ENCODE measurements at regions of chr14 and their contacts with region 1.

Region 1: GRCh38 chr14:95561001-95561412 is 26.2 kb downstream of the GLRX5 start:
- DNase-seq: peak; percentile 97
- H3K4me3 Mint-ChIP-seq: no peak overlapping the region
- H3K27ac Mint-ChIP-seq: no peak overlapping the region
- H3K4me1 Mint-ChIP-seq: peaks cover 2% of the 10 kb centered on the region
- H3K27me3 Mint-ChIP-seq: peaks cover 4% of the 10 kb centered on the region

Region 2: DNA sequence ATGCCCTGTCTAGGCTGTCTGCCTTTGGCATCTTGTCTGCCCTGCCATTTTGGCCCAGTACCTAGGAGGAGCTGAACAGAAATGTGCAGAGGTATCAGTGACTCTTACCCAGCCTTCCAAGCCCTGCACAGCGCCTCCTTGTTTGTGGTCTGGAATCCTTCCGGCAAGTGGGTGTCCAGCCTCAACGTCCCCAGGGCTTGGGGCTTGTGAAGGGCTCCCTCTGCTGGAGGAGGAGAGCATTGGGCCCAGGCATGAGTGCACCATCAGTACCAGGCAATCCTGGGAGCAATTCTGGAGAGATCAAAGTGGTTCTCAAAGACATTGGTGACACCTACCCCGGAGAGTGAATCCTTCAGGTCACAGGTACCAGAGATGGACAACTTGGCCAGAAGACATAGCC is 122.8 kb after region 1 on chr14:
- intact Hi-C with region 1: loop called (anchors 2 kb)
- DNase-seq: peak; percentile 76
- H3K4me3 Mint-ChIP-seq: no peak overlapping the region
- H3K27ac Mint-ChIP-seq: no peak overlapping the region
- H3K4me1 Mint-ChIP-seq: no peaks in the 10 kb centered on the region
- H3K27me3 Mint-ChIP-seq: peaks cover 10% of the 10 kb centered on the region

Region 3: DNA sequence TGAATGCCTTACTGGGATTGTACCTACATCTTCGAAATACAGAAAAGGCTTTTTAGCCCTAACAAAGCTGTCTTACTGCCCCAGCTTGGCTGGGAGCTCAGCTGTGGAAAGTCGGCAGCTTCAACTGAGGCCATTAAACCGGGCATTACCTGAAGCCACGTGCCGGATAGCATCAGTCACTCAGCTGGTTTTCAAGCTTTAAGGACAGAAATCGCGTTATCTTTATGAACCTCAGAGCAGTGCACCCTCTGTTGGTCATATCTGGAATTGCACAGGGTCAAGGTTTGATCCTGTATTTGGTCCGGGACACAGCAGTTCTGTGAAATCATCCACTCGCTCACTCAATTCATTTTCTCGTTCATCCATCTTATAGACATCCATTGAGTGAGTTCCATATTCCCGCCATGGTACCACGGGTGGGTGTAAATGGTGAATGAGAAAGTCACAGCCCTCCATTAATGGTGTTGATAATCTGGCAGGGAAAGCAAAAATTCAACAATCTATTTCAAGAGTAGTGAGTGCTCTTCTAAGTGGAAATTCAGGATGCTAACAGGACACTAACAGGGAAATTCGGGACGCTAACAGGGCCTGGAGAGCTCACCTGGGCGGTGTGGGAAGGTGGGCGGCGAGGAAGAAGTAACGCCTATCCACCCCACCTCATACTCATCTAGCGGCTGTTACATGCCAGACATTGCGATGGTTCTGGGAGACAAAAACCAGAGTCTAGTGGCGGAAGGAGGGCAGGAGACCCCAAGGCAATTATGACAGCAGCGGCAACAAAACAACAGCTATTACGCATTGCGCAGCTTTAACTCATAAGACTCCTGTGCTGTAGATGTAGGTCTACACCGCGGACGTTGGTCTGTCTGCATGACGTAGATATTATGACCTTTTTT is 213.5 kb after region 1 on chr14:
- intact Hi-C with region 1: loop called (anchors 1 kb)
- DNase-seq: peak; percentile 86
- H3K4me3 Mint-ChIP-seq: no peak overlapping the region
- H3K27ac Mint-ChIP-seq: no peak overlapping the region
- H3K4me1 Mint-ChIP-seq: no peaks in the 10 kb centered on the region
- H3K27me3 Mint-ChIP-seq: peaks cover 8% of the 10 kb centered on the region

Region 4: DNA sequence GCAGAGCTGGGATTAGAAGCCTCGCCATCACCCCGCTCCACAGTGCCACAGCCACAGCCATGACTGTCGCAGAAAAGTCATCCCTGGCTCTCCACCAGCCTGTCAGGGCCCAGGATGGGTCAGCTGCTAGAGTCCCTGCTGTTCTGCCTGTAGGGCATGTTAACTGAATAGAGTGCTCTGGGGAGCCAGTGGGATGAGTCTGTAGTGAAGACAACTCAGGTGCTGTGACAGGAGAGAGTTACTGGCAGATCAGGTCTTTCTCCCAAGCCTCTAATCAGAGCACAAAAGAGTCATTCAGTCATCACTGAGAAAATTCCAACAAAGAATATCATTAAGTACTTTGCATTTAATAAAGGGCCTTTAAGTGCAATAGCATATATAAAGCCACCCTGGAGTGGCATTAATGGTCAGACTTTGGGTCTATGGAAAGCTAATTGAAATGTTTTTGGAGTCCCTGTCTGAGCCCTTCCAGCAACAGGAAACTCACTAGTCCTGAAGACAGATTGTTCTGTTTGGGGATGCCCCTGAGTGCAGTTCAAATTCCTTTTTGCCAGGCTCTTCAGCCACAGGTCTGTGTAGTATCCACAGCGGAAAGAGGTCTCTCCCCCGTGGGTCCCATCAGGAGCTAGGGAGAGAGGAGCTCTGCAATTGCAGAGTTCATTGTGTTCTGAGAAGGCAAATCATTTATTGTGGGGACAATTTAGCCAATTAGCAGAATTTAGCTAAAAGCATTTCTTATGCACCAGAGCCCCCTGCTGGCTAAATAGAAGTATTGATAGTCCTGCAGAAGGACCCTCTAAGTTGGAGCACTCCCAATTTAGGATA is 433.0 kb after region 1 on chr14:
- intact Hi-C with region 1: loop called (anchors 1 kb)
- DNase-seq: peak; percentile 71
- H3K4me3 Mint-ChIP-seq: no peak overlapping the region
- H3K27ac Mint-ChIP-seq: no peak overlapping the region
- H3K4me1 Mint-ChIP-seq: no peaks in the 10 kb centered on the region
- H3K27me3 Mint-ChIP-seq: peaks cover 10% of the 10 kb centered on the region

Region 5: DNA sequence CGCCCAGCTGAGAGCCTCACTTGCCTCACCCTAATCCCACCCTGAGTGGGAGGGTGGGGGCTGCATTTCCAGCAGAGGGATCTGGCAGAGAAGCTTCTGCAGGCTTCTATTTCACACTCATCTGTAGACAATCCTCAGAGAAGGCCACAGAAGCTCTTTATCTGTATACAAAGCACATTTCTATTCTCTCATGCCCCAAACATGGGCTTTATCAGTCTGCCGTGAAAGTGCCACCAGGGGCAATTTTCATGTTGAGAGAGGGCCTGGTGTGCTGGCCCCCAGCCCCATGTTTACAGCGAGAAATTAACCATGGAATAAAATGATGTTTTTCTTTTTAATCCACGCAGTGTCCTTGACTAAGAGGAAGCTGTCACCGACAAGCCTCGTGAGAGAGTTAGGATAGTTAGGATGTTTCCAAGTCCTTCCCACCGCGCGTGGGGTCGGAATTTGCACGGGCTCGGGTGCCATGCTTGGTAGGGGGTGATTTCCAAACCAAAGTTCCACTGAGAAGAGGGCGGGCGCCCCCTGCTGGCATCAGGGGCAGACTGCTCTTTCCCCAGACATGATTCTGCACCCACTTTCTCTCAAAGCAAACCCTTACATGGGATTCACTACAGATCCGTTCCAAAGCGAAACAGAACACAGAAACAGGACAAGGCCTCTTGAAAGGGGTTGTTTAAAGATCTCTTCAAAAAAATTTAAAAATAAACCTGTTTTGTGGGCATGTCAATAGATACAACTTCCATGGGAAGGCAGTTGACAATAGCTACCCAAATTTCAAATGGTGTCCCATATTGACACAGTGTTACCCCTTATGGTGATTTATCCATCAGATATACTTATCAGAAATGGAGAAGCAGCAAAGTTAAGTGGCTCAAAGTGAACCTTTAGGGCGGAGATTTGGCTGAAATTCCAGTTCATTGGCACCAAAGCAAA is 714.4 kb after region 1 on chr14:
- intact Hi-C with region 1: loop called (anchors 10 kb)
- DNase-seq: peak; percentile 89
- H3K4me3 Mint-ChIP-seq: no peak overlapping the region
- H3K27ac Mint-ChIP-seq: no peak overlapping the region
- H3K4me1 Mint-ChIP-seq: peaks cover 2% of the 10 kb centered on the region
- H3K27me3 Mint-ChIP-seq: peaks cover 2% of the 10 kb centered on the region

Region 6: DNA sequence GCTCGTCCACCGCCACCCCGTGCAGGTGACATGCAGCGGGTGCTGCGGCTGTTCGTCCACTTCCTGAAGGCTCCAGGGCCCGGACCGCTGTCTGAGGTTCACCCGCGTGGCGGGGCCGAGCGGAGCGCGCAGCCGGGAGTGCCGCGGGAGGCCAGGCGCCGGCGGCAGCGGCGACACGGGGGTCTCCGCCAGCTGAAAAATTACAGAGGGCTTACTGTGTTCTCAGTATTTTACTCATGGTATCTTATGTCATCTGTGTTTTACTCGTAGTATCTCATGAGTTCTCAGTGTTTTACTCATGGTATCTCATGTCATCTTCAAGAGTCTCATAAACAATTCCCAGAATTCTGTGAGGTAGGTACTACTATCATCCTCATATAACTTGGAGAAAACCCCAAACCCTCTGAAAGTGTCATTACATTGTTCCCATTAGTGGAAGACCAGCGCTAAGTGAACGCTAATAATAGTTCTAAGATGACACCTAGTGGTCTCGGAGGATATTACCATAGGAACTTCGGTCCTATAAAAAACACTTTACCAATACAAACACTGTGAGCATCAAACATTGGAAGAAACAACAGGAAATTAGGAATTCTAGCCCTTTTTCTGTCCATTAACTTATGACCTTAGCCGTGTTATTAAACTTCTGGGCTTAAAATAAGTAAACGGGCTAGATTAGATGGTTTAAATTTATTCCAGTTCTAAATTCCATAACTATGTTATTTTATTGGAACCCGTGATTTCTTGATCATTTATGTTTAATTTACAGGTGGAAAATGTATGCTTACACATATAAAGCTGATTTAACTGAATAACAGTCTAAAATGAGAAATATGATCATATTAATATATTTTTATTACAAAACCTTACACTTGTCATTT is 863.3 kb after region 1 on chr14:
- intact Hi-C with region 1: loop called (anchors 1 kb)
- DNase-seq: peak; percentile 79
- H3K4me3 Mint-ChIP-seq: peak overlapping the region; percentile 80
- H3K27ac Mint-ChIP-seq: no peak overlapping the region
- H3K4me1 Mint-ChIP-seq: peaks cover 4% of the 10 kb centered on the region
- H3K27me3 Mint-ChIP-seq: peaks cover 7% of the 10 kb centered on the region

Measured in activated CD4-positive, alpha-beta T cell treated with anti-CD3 and anti-CD28 coated beads, Interleukin-2, amount 10 ng/mL, durations not matched to agents 24 days and 14 days (primary cell).